ENCODE measurements at regions of chr12 and their contacts with region 1.

Region 1: GRCh38 chr12:6890789-6891645 is 13.6 kb upstream of the LRRC23 start:
- DNase-seq: peak; percentile 98
- ATAC-seq: peak; percentile 95
- H3K4me3 ChIP-seq: peak overlapping the region; percentile 61 to 79 (median 76)
- H3K4me3 Mint-ChIP-seq: peak overlapping the region; percentile 87
- H3K27ac ChIP-seq: peak overlapping the region; percentile 93 to 94
- H3K27ac Mint-ChIP-seq: peak overlapping the region; percentile 91
- H3K4me1 ChIP-seq: peaks cover 9 to 13% of the 10 kb centered on the region in 2 donors
- H3K4me1 Mint-ChIP-seq: peaks cover 15% of the 10 kb centered on the region
- H3K27me3 ChIP-seq: no peaks in the 10 kb centered on the region
- H3K27me3 Mint-ChIP-seq: no peaks in the 10 kb centered on the region
- CTCF ChIP-seq: peak; percentile 90

Region 2: DNA sequence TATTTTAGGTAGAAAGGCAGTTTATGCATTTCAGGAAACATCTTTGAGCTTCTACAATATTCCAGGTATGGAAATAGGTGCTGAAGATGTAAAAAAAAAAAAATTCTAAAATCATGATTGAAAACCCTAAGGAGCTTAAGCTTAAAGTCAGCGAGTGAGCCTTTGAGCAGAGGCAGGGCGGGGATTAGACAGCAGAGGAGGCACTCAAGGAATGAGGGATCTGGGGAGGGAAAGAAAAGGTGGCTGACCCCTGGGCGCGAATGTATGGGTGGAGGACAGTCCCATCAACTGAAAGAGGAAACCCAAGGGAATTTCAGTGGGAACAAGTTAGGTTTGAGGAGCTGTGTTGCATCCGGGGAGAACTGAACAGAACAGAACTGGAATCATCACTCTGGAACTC is 131.3 kb before region 1 on chr12:
- CTCF ChIA-PET with region 1: no interaction called
- POLR2A ChIA-PET with region 1: no interaction called
- intact Hi-C with region 1: no loop called
- DNase-seq: no peak
- ATAC-seq: no peak
- H3K4me3 ChIP-seq: no peak overlapping the region
- H3K4me3 Mint-ChIP-seq: no peak overlapping the region
- H3K27ac ChIP-seq: no peak overlapping the region
- H3K27ac Mint-ChIP-seq: no peak overlapping the region
- H3K4me1 ChIP-seq: peaks cover 13 to 15% of the 10 kb centered on the region in 2 donors
- H3K4me1 Mint-ChIP-seq: peaks cover 14% of the 10 kb centered on the region
- H3K27me3 ChIP-seq: peaks cover 0 to 9% (median 4%) of the 10 kb centered on the region in 4 experiments
- H3K27me3 Mint-ChIP-seq: peaks cover 19% of the 10 kb centered on the region
- CTCF ChIP-seq: no peak

Region 3: GRCh38 chr12:6825398-6826124 is 65.5 kb before region 1 on chr12:
- CTCF ChIA-PET with region 1: no interaction called
- POLR2A ChIA-PET with region 1: no interaction called
- intact Hi-C with region 1: no loop called
- DNase-seq: peak; percentile 80
- ATAC-seq: peak; percentile 66
- H3K4me3 ChIP-seq: no peak overlapping the region
- H3K4me3 Mint-ChIP-seq: no peak overlapping the region
- H3K27ac ChIP-seq: no peak overlapping the region
- H3K27ac Mint-ChIP-seq: no peak overlapping the region
- H3K4me1 ChIP-seq: peaks cover 37 to 40% of the 10 kb centered on the region in 2 donors
- H3K4me1 Mint-ChIP-seq: peaks cover 31% of the 10 kb centered on the region
- H3K27me3 ChIP-seq: peaks cover 0 to 82% (median 41%) of the 10 kb centered on the region in 4 experiments
- H3K27me3 Mint-ChIP-seq: peaks cover 78% of the 10 kb centered on the region
- CTCF ChIP-seq: peak; percentile 86

Region 4: GRCh38 chr12:6867413-6868210 is 23.4 kb before region 1 on chr12 and contains the start of gene TPI1:
- CTCF ChIA-PET with region 1: interaction called, 77 read pairs
- POLR2A ChIA-PET with region 1: interaction called, 30 read pairs
- intact Hi-C with region 1: no loop called
- DNase-seq: peak; percentile 83
- ATAC-seq: peak; percentile 83
- H3K4me3 ChIP-seq: peak within 1 kb of the TSS; percentile 56 to 88 (median 68)
- H3K4me3 Mint-ChIP-seq: peak within 1 kb of the TSS; percentile 96
- H3K27ac ChIP-seq: peak within 1 kb of the TSS; percentile 70 to 77
- H3K27ac Mint-ChIP-seq: peak within 1 kb of the TSS; percentile 97
- H3K4me1 ChIP-seq: peaks cover 33 to 41% of the 10 kb centered on the region in 2 donors
- H3K4me1 Mint-ChIP-seq: peaks cover 50% of the 10 kb centered on the region
- H3K27me3 ChIP-seq: no peaks in the 10 kb centered on the region
- H3K27me3 Mint-ChIP-seq: no peaks in the 10 kb centered on the region
- CTCF ChIP-seq: no peak
- total RNA-seq, gene TPI1: 178 and 181 TPM in 2 replicates

Region 5: DNA sequence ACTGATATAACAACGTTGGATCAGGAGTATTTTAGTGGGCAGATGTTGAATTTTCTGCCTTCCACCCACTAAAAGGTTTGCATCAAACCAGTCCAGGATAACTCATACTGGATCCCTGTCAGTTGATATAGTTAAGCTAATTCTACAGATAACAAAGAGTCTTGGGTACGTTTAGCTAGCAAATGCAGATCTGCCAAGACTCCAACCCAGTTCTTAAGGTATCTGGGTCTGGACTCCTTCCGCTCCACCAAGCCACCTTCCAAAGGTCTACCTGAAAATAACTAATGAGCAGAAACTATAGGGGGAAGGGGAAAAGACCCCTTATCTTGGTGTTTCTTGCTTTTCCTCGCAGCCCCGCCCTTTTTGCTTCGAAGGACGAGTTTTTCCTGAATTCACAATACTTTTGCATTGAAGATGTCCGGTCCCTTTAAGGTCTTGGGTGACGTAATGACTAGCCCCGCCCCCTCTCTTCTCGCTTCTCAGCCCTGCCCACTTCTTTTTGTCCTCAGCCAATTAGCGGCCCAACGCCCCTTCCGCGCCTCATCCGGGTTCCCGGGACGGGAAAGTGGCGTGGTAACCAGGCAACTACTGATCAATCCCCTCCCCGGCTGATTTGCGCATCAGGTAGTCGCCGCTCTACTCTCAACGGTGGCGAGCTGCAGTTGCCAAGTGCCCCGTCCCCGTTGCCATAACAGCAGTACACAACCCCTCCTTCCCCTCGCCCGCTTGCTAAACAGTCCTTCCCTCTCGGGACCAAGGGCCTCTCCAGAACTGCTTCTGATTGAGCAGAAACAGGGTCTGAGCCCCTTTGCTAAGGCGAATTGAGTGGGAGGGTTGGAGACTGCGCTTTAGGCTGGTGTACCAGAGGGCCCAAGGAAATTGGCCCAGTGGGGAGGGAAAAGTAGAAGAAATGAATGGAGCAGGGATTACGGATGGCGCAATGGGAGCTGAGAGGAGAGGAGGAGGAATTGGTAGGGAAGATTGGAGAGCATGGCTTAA is 13.6 kb after region 1 on chr12 and contains the start of gene LRRC23:
- CTCF ChIA-PET with region 1: interaction called, 14 read pairs
- POLR2A ChIA-PET with region 1: interaction called, 7 read pairs
- intact Hi-C with region 1: loop called (anchors 1 kb)
- DNase-seq: peak; percentile 98
- ATAC-seq: peak; percentile 98
- H3K4me3 ChIP-seq: peak within 1 kb of the TSS; percentile 59 to 86 (median 74)
- H3K4me3 Mint-ChIP-seq: no peak within 1 kb of the TSS
- H3K27ac ChIP-seq: peak within 1 kb of the TSS; percentile 82 to 94
- H3K27ac Mint-ChIP-seq: no peak within 1 kb of the TSS
- H3K4me1 ChIP-seq: peaks cover 14 to 24% of the 10 kb centered on the region in 2 donors
- H3K4me1 Mint-ChIP-seq: peaks cover 6% of the 10 kb centered on the region
- H3K27me3 ChIP-seq: no peaks in the 10 kb centered on the region
- H3K27me3 Mint-ChIP-seq: no peaks in the 10 kb centered on the region
- CTCF ChIP-seq: no peak
- total RNA-seq, gene LRRC23: 14.4 and 15.5 TPM in 2 replicates

Region 6: DNA sequence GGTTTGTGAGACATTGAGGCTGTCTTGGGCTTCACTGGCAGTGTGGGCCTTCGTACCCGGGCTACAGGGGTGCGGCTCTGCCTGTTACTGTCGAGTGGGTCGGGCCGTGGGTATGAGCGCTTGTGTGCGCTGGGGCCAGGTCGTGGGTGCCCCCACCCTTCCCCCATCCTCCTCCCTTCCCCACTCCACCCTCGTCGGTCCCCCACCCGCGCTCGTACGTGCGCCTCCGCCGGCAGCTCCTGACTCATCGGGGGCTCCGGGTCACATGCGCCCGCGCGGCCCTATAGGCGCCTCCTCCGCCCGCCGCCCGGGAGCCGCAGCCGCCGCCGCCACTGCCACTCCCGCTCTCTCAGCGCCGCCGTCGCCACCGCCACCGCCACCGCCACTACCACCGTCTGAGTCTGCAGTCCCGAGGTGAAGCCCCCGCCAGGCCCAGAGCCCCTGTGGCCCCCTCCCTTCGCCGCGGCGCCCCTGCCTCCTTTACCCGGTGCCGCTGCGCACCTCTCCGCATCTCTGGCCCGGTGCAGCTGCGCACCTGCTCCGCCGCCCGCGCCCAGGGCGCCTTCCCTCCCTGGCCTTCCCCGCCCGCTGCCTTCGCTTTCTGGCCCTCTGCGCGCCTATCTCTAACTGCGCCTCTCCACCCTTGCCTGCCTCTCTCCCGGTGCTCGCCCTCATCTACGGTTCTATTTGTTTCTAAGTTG is 23.4 kb after region 1 on chr12 and contains the start of gene ENO2:
- CTCF ChIA-PET with region 1: interaction called, 11 read pairs
- POLR2A ChIA-PET with region 1: interaction called, 5 read pairs
- intact Hi-C with region 1: no loop called
- DNase-seq: peak; percentile 83
- ATAC-seq: peak; percentile 91
- H3K4me3 ChIP-seq: peak within 1 kb of the TSS in 4 of 5 experiments; percentile 38 to 75 (median 58)
- H3K4me3 Mint-ChIP-seq: peak within 1 kb of the TSS; percentile 89
- H3K27ac ChIP-seq: peak within 1 kb of the TSS; percentile 43 to 64
- H3K27ac Mint-ChIP-seq: peak within 1 kb of the TSS; percentile 89
- H3K4me1 ChIP-seq: peaks cover 11 to 19% of the 10 kb centered on the region in 2 donors
- H3K4me1 Mint-ChIP-seq: peaks cover 25% of the 10 kb centered on the region
- H3K27me3 ChIP-seq: peaks cover 0 to 10% (median 1%) of the 10 kb centered on the region in 4 experiments
- H3K27me3 Mint-ChIP-seq: no peaks in the 10 kb centered on the region
- CTCF ChIP-seq: no peak
- total RNA-seq, gene ENO2: 55.3 and 59.7 TPM in 2 replicates

Region 7: DNA sequence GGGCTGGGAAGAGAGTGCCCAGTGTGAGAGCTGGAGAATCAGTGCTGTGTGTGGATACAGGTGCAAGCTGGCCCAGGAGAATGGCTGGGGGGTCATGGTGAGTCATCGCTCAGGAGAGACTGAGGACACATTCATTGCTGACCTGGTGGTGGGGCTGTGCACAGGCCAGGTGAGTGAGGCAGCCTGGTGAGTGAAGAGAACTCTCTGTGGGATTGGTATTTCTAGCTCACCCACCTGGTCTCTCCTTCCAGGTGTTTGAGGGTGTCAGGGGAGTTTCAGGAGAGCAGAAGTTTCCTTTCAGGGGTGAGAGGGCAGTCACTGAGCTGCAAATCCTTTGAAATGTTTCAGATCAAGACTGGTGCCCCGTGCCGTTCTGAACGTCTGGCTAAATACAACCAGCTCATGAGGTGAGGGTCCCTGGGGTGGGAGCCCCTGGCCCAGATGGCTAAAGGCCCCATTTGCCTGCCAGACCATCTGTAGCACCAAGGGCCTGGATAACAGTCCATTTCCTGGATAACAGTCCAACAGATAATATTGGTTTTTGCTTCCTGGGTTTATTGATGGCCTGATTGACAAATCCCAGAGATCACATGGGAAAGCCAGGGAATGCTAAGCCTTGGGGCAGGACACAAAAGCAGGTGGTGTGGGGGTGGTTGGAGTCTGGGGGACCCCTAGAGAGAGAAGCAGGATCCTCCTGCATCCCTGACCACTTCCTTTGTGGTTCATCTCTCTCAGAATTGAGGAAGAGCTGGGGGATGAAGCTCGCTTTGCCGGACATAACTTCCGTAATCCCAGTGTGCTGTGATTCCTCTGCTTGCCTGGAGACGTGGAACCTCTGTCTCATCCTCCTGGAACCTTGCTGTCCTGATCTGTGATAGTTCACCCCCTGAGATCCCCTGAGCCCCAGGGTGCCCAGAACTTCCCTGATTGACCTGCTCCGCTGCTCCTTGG is 31.3 kb after region 1 on chr12:
- CTCF ChIA-PET with region 1: interaction called, 14 read pairs
- POLR2A ChIA-PET with region 1: interaction called, 3 read pairs
- intact Hi-C with region 1: loop called (anchors 1 kb)
- DNase-seq: peak; percentile 59
- ATAC-seq: peak; percentile 23
- H3K4me3 ChIP-seq: no peak overlapping the region
- H3K4me3 Mint-ChIP-seq: peak overlapping the region; percentile 60
- H3K27ac ChIP-seq: peak overlapping the region; percentile 54 to 57
- H3K27ac Mint-ChIP-seq: peak overlapping the region; percentile 41
- H3K4me1 ChIP-seq: peaks cover 39 to 50% of the 10 kb centered on the region in 2 donors
- H3K4me1 Mint-ChIP-seq: peaks cover 50% of the 10 kb centered on the region
- H3K27me3 ChIP-seq: no peaks in the 10 kb centered on the region
- H3K27me3 Mint-ChIP-seq: no peaks in the 10 kb centered on the region
- CTCF ChIP-seq: no peak

Region 8: DNA sequence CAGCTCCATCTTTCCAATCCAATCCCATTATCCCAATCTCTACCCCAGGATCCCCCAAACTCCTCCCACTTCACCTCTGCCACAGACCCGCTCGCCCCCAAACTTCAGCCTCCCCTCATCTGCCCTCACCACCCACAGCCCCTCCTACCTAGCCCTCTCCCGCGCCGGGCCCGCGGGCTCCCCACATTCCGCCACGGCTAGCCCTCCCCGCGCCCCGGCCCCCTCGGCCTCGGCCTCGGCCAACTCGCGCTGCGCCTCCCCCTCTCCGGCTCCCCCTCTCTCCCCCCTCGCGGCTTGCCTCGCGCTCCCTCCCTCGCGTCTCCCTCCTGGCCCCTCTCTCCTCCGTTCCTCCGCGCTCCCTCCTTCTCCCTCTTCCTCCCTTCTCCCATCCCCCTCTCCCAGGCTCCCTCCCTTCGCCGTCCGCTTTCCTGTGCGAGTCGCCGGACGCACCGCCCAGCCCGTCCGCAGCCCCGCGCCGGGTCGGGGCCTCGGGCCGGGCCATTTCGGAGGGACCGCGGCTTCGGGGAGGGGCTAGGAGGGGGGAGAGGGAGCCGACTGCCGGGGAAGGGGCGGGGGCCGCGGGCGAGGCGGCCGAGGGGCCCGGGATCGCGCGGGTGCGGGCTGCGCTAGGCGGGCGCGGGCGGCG is 36.5 kb after region 1 on chr12 and contains the start of gene ATN1:
- CTCF ChIA-PET with region 1: interaction called, 14 read pairs
- POLR2A ChIA-PET with region 1: interaction called, 3 read pairs
- intact Hi-C with region 1: loop called (anchors 1 kb)
- DNase-seq: peak; percentile 71
- ATAC-seq: peak; percentile 44
- H3K4me3 ChIP-seq: peak within 1 kb of the TSS; percentile 15 to 86 (median 83)
- H3K4me3 Mint-ChIP-seq: peak within 1 kb of the TSS; percentile 88
- H3K27ac ChIP-seq: peak within 1 kb of the TSS; percentile 69 to 84
- H3K27ac Mint-ChIP-seq: peak within 1 kb of the TSS; percentile 97
- H3K4me1 ChIP-seq: peaks cover 36 to 51% of the 10 kb centered on the region in 2 donors
- H3K4me1 Mint-ChIP-seq: peaks cover 56% of the 10 kb centered on the region
- H3K27me3 ChIP-seq: no peaks in the 10 kb centered on the region
- H3K27me3 Mint-ChIP-seq: no peaks in the 10 kb centered on the region
- CTCF ChIP-seq: no peak
- total RNA-seq, gene ATN1: 49.5 and 50.8 TPM in 2 replicates

Region 9: DNA sequence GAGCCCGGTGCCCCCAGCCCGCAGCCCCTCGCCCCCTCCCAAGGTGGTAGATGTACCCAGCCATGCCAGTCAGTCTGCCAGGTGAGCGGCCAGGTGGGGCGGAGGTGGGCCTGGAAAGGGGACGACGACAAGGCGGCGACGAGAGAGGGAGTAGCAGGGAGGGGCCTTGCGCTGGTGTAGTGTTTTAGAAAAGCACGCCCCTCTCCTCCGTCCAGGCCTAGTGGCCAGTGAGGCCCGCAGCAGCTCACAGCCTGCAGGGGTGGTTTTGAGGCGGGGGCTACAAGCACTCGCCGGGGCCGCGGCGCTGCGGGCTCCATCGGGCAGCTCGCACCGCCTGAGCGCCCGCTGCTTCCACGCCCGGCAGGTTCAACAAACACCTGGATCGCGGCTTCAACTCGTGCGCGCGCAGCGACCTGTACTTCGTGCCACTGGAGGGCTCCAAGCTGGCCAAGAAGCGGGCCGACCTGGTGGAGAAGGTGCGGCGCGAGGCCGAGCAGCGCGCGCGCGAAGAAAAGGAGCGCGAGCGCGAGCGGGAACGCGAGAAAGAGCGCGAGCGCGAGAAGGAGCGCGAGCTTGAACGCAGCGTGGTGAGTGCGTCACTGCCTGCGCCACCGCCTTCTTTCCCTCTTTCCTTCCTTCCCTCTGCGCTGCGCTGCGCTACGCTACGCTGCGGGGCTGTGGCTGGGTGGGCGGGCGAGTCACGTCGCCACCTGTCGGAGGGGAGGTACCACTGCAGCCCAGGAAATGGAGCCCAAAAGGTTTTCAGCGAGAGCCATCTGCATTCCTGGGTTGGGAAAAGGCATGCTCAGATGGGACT is 46.7 kb after region 1 on chr12:
- CTCF ChIA-PET with region 1: interaction called, 3 read pairs
- POLR2A ChIA-PET with region 1: interaction called, 4 read pairs
- intact Hi-C with region 1: loop called (anchors 1 kb)
- DNase-seq: peak; percentile 98
- ATAC-seq: peak; percentile 91
- H3K4me3 ChIP-seq: peak overlapping the region; percentile 28 to 94 (median 80)
- H3K4me3 Mint-ChIP-seq: peak overlapping the region; percentile 87
- H3K27ac ChIP-seq: peak overlapping the region; percentile 88 to 91
- H3K27ac Mint-ChIP-seq: peak overlapping the region; percentile 97
- H3K4me1 ChIP-seq: peaks cover 17 to 31% of the 10 kb centered on the region in 2 donors
- H3K4me1 Mint-ChIP-seq: peaks cover 37% of the 10 kb centered on the region
- H3K27me3 ChIP-seq: no peaks in the 10 kb centered on the region
- H3K27me3 Mint-ChIP-seq: no peaks in the 10 kb centered on the region
- CTCF ChIP-seq: peak; percentile 92

Region 10: DNA sequence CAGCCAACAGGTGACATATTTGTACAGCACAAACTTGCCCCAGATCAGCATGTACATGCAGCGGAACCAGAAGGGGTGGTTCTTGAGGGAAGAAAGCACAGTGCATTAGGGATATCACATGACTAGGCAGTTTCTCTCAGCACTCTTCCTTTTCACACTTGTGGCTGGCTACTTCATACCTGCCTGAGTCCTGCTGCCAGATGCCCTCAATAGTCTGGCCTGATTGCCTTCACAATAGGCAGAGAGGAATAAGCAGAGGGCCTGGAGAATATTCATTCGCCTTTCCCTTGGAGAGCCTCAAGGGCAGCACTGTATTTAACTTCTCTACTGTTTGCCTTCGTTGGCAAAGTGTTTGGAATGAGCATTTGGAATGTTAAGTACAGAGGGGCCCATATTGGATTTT is 87.6 kb after region 1 on chr12:
- CTCF ChIA-PET with region 1: no interaction called
- POLR2A ChIA-PET with region 1: no interaction called
- intact Hi-C with region 1: no loop called
- DNase-seq: no peak
- ATAC-seq: no peak
- H3K4me3 ChIP-seq: no peak overlapping the region
- H3K4me3 Mint-ChIP-seq: no peak overlapping the region
- H3K27ac ChIP-seq: no peak overlapping the region
- H3K27ac Mint-ChIP-seq: no peak overlapping the region
- H3K4me1 ChIP-seq: no peaks in the 10 kb centered on the region
- H3K4me1 Mint-ChIP-seq: no peaks in the 10 kb centered on the region
- H3K27me3 ChIP-seq: no peaks in the 10 kb centered on the region
- H3K27me3 Mint-ChIP-seq: no peaks in the 10 kb centered on the region
- CTCF ChIP-seq: no peak

Region 11: GRCh38 chr12:7479771-7480170 is 588.8 kb after region 1 on chr12:
- CTCF ChIA-PET with region 1: no interaction called
- POLR2A ChIA-PET with region 1: no interaction called
- intact Hi-C with region 1: no loop called
- DNase-seq: no peak
- ATAC-seq: no peak
- H3K4me3 ChIP-seq: no peak overlapping the region
- H3K4me3 Mint-ChIP-seq: no peak overlapping the region
- H3K27ac ChIP-seq: no peak overlapping the region
- H3K27ac Mint-ChIP-seq: no peak overlapping the region
- H3K4me1 ChIP-seq: no peaks in the 10 kb centered on the region
- H3K4me1 Mint-ChIP-seq: no peaks in the 10 kb centered on the region
- H3K27me3 ChIP-seq: peaks cover 0 to 4% (median 0%) of the 10 kb centered on the region in 4 experiments
- H3K27me3 Mint-ChIP-seq: peaks cover 17% of the 10 kb centered on the region
- CTCF ChIP-seq: no peak

Measured in B cell (primary cell).